ENCODE measurements at regions of chr3 and their contacts with region 1.

Region 1: DNA sequence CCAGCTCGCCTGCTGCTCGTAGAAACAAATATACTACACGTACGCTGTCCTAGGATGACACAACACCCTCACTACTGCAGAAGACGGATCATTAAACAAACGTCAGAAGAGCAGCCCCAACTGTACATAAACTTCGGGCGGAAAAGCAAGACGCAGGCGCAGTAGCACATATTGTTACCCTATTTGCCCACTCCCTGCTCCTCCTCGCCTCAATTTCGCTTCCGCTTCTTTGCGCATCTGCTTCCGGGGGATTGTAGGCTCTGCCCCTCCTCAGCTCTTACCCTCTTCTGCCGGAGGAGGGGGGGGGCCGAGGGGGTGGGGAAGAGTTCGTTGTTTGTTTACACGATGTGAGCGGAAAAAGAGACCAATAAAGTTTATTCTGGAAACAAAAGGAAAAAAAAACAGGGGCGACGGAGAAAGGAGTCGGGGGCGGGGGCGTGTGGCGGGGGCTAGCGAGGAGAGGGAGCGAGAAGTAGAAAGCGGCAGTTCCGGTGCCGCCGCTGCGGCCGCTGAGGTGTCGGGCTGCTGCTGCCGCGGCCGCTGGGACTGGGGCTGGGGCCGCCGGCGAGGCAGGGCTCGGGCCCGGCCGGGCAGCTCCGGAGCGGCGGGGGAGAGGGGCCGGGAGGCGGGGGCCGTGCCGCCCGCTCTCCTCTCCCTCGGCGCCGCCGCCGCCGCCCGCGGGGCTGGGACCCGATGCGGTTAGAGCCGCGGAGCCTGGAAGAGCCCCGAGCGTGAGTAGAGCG is at the start of gene PIK3CA:
- DNase-seq: peak; percentile 90 to 97
- H3K4me3 ChIP-seq: peak within 1 kb of the TSS; percentile 75
- H3K4me3 Mint-ChIP-seq: no peak within 1 kb of the TSS
- H3K27ac Mint-ChIP-seq: no peak within 1 kb of the TSS
- H3K4me1 ChIP-seq: no peaks in the 10 kb centered on the region
- H3K4me1 Mint-ChIP-seq: peaks cover 7% of the 10 kb centered on the region
- H3K27me3 ChIP-seq: no peaks in the 10 kb centered on the region
- H3K27me3 Mint-ChIP-seq: no peaks in the 10 kb centered on the region
- CTCF ChIP-seq: no peak
- total RNA-seq, gene PIK3CA: 8.4 and 10.6 TPM in 2 replicates

Region 2: GRCh38 chr3:178969004-178969700 is 178.9 kb before region 1 on chr3:
- CTCF ChIA-PET with region 1: no interaction called
- POLR2A ChIA-PET with region 1: no interaction called
- intact Hi-C with region 1: no loop called
- DNase-seq: no peak
- H3K4me3 ChIP-seq: no peak overlapping the region
- H3K4me3 Mint-ChIP-seq: no peak overlapping the region
- H3K27ac Mint-ChIP-seq: no peak overlapping the region
- H3K4me1 ChIP-seq: no peaks in the 10 kb centered on the region; the same call in none of the 2 replicates
- H3K4me1 Mint-ChIP-seq: no peaks in the 10 kb centered on the region
- H3K27me3 ChIP-seq: no peaks in the 10 kb centered on the region
- H3K27me3 Mint-ChIP-seq: no peaks in the 10 kb centered on the region
- CTCF ChIP-seq: no peak

Region 3: GRCh38 chr3:179071550-179072397 is 76.3 kb before region 1 on chr3 and contains the start of gene ZMAT3:
- CTCF ChIA-PET with region 1: no interaction called
- POLR2A ChIA-PET with region 1: interaction called, 4 read pairs
- intact Hi-C with region 1: loop called (anchors 1 kb)
- DNase-seq: peak; percentile 78 to 86
- H3K4me3 ChIP-seq: peak within 1 kb of the TSS; percentile 65
- H3K4me3 Mint-ChIP-seq: peak within 1 kb of the TSS; percentile 95
- H3K27ac Mint-ChIP-seq: no peak within 1 kb of the TSS
- H3K4me1 ChIP-seq: 0 out of 2 replicates have a peak, but pooled peaks cover 3% of the 10 kb centered on the region
- H3K4me1 Mint-ChIP-seq: no peaks in the 10 kb centered on the region
- H3K27me3 ChIP-seq: no peaks in the 10 kb centered on the region
- H3K27me3 Mint-ChIP-seq: no peaks in the 10 kb centered on the region
- CTCF ChIP-seq: no peak
- total RNA-seq, gene ZMAT3: 7.6 and 8.8 TPM in 2 replicates

Region 4: GRCh38 chr3:179158336-179159039 is 10.4 kb after region 1 on chr3:
- CTCF ChIA-PET with region 1: interaction called, 10 read pairs
- POLR2A ChIA-PET with region 1: no interaction called
- intact Hi-C with region 1: no loop called
- DNase-seq: no peak
- H3K4me3 ChIP-seq: no peak overlapping the region
- H3K4me3 Mint-ChIP-seq: no peak overlapping the region
- H3K27ac Mint-ChIP-seq: no peak overlapping the region
- H3K4me1 ChIP-seq: no peaks in the 10 kb centered on the region
- H3K4me1 Mint-ChIP-seq: no peaks in the 10 kb centered on the region
- H3K27me3 ChIP-seq: no peaks in the 10 kb centered on the region
- H3K27me3 Mint-ChIP-seq: no peaks in the 10 kb centered on the region
- CTCF ChIP-seq: no peak

Region 5: GRCh38 chr3:179272385-179272784 is 124.3 kb after region 1 on chr3:
- CTCF ChIA-PET with region 1: interaction called, 3 read pairs
- POLR2A ChIA-PET with region 1: no interaction called
- intact Hi-C with region 1: loop called (anchors 5 kb)
- DNase-seq: no peak
- H3K4me3 ChIP-seq: no peak overlapping the region
- H3K4me3 Mint-ChIP-seq: no peak overlapping the region
- H3K27ac Mint-ChIP-seq: no peak overlapping the region
- H3K4me1 ChIP-seq: no peaks in the 10 kb centered on the region
- H3K4me1 Mint-ChIP-seq: no peaks in the 10 kb centered on the region
- H3K27me3 ChIP-seq: no peaks in the 10 kb centered on the region
- H3K27me3 Mint-ChIP-seq: no peaks in the 10 kb centered on the region
- CTCF ChIP-seq: no peak

Region 6: DNA sequence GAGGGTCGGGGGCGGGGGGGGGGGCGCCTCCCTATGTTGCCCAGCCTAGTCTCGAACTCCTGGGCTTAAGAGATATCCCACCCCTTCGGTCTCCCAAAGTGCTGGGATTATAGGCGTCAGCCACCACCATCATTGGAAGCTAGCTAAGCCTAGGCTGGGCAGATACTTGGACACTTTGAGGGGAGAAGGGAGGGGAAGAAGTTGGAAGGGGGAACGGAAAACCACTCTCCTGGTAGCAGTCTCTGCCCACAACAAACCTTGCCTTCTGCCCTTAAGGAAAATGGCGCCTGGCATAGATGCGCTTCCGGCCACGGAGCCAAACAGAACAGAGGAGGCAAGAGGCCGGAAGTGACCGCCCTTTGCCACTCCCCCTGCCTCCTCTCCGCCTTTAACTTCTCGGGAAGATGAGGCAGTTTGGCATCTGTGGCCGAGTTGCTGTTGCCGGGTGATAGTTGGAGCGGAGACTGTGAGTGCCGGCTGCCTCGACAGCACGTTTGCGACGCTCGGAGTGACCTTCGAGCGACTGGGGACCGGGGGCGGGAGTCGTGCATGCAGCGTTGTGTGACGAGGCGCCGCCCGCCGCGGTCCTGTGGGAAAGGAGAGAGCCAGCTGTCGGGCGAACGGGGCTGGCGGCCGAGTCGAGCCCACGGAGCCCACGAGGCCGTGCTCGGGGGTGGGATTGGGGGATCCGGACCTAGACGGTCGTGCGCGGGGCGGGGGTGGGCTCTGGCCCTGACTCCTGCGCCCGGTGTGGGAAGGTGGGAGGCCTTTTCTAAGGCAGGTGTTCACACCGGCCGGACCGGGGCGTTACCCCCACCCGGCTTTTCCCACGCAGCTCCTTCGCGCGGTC is 199.5 kb after region 1 on chr3 and contains the start of gene MFN1:
- CTCF ChIA-PET with region 1: interaction called, 5 read pairs
- POLR2A ChIA-PET with region 1: no interaction called
- intact Hi-C with region 1: loop called (anchors 1 kb)
- DNase-seq: peak; percentile 89 to 92
- H3K4me3 ChIP-seq: peak within 1 kb of the TSS; percentile 62
- H3K4me3 Mint-ChIP-seq: peak within 1 kb of the TSS; percentile 98
- H3K27ac Mint-ChIP-seq: peak within 1 kb of the TSS; percentile 96
- H3K4me1 ChIP-seq: peaks cover 10% of the 10 kb centered on the region
- H3K4me1 Mint-ChIP-seq: no peaks in the 10 kb centered on the region
- H3K27me3 ChIP-seq: no peaks in the 10 kb centered on the region
- H3K27me3 Mint-ChIP-seq: no peaks in the 10 kb centered on the region
- CTCF ChIP-seq: no peak
- total RNA-seq, gene MFN1: 46.3 and 53.9 TPM in 2 replicates